ENCODE measurements at regions of chr1 and their contacts with region 1.

Region 1: DNA sequence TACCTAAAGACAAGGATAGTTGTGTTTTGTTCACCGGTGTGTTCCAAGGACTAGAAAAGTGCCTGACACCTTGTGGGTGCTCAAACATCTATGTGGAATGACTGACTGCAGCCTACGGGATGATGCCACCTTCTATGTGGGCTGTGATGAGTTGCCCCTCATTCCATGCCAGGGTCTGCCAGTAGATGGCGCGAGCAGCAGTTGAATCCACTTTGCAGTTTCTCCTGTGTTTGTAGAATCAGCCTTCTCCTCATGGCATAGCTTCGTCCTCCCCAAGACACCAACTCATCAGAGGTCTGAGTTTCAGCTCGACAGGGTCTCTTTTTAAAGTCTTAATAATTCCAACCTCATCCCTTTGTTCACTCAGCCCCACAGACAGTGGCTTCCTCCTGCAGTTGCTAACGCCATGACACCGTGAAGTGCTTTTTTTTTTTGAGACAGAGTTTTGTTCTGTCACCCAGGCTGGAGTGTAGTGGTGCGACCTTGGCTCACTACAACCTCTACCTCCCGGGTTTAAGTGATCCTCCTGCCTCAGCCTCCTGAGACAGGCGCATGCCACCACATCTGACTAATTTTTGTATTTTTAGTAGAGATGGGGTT is 133.7 kb downstream of the CAPN8 start:
- DNase-seq: peak; percentile 46 to 68
- H3K4me3 ChIP-seq: no peak overlapping the region
- H3K27ac ChIP-seq: no peak overlapping the region
- H3K4me1 ChIP-seq: no peaks in the 10 kb centered on the region
- H3K27me3 ChIP-seq: no peaks in the 10 kb centered on the region
- CTCF ChIP-seq: peak; percentile 74

Region 2: DNA sequence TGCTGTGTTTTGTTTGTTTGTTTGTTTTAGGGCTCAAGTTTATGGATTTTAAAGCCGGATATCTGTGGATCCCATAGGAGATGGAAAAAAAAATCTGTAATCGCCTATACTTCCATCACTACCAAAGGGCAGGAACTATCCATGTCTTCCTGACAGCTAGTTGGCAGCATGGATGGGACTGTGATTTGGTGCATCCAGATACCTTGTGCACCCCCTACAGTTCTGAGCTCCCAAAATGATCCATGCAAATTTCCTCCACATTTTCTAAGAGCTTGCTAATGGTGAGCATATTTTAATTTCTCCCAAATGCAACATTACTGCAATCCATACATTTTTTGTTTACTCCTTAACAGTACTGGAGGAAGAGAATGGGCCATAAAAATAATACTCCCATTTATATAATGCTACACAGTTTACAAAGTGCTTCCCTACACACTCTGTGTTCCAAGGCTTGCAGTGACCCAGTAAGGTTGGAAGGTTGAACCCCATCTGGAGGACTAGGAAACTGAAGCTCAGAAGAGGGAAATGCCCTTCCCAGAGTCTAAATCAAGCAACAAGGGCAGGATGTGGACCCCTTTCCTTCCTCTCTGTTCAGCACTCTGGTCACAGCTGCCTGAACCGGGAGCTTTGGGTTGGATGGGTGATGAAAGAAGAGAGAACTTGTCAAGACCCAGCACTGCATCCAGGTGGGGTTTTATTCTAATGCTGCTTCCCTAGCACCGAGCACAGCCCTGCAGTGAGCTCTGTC is 85.7 kb after region 1 on chr1:
- CTCF ChIA-PET with region 1: no interaction called
- POLR2A ChIA-PET with region 1: interaction called, 17 read pairs
- intact Hi-C with region 1: no loop called
- DNase-seq: no peak
- H3K4me3 ChIP-seq: no peak overlapping the region
- H3K27ac ChIP-seq: no peak overlapping the region
- H3K4me1 ChIP-seq: no peaks in the 10 kb centered on the region
- H3K27me3 ChIP-seq: no peaks in the 10 kb centered on the region
- CTCF ChIP-seq: no peak

Measured in PC-9 (cell line).